ENCODE measurements at regions of chr3 and their contacts with region 1.

Region 1: GRCh38 chr3:150408221-150409102 is at the start of gene TSC22D2:
- DNase-seq: peak; percentile 97
- ATAC-seq: peak; percentile 85 to 91
- total RNA-seq, gene TSC22D2: 24.0 to 34.9 TPM

Region 2: DNA sequence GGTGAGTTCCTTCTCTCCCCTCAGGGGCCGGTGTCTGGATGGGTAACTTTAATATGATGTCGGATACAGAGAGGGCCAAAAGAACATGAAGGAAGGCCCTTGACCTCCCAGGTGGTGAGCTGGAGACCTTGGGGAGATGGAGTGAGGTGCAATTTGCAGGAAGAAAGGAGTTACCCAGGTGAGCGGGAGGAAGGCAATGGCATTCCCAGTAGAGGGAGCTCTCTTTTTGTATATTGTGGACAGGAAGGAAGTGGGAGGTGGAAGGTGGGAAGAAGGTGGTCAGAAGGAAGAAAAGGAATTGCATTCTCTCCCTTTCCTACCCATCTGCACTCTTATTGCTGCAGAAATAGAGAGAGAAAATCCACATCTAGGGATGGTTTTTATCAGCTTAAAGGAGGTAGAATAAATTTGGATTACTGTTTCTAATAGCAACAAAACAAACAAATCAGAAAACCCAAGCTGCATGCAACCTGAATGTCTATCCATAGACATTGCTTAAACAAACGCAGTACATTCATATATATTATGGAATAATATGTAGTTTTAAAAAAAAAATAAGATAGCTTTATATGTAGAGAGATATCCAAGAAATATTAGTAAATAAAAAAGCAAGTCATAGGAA is 169.4 kb before region 1 on chr3:
- intact Hi-C with region 1: loop called in 1 of 2 experiments (anchors 10 kb)
- DNase-seq: no peak
- ATAC-seq: no peak

Region 3: GRCh38 chr3:150286390-150287147 is 121.9 kb before region 1 on chr3:
- intact Hi-C with region 1: loop called in 1 of 2 experiments (anchors 5 kb)
- DNase-seq: no peak
- ATAC-seq: peak in 1 of 2 donors; percentile 77

Region 4: DNA sequence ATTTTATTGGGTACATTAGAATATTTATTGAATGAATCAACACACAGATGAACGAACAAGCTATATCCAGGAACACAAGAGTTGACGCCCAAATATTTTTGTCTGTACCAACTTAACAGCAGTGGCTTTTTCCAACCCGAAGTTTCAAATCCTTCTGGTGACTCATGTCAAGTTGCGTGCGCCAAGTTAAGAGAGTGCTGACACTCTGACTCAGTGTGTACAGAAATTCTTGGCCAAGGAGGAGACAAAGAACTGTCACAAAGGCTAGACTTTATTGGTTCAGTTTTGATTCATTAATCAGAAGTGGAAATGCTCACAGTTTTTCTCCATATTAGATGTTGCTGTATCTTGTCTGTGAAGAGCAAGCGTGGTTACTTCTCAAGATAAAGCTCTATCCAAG is 60.0 kb before region 1 on chr3:
- intact Hi-C with region 1: loop called in 1 of 2 experiments (anchors 2 kb)
- DNase-seq: no peak
- ATAC-seq: peak; percentile 81 to 88

Region 5: DNA sequence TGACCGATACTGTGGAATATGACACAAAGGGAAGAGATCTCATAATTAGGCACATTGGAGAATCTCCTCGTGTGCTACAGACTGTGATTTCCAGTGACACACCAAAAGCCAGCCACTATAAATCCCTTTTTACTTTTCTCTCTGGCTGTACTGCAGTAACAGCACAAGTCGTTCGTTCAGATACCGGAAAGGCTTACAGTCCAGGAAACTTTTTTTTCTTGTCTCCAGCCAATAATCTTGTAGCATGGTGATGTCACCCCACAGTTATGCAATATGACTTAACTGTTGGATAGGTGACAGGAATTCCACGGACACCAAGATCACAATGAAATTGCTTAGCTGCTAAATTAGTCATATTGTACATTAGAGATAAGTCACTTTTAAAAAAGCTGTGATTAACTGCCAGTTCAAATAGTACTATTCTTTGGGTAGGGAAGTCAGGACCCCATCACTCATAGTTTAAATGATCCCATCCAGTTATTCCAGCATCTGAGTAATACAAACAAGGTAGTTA is 36.7 kb before region 1 on chr3:
- intact Hi-C with region 1: loop called in 1 of 2 experiments (anchors 5 kb)
- DNase-seq: peak; percentile 27
- ATAC-seq: peak; percentile 93 to 96

Region 6: DNA sequence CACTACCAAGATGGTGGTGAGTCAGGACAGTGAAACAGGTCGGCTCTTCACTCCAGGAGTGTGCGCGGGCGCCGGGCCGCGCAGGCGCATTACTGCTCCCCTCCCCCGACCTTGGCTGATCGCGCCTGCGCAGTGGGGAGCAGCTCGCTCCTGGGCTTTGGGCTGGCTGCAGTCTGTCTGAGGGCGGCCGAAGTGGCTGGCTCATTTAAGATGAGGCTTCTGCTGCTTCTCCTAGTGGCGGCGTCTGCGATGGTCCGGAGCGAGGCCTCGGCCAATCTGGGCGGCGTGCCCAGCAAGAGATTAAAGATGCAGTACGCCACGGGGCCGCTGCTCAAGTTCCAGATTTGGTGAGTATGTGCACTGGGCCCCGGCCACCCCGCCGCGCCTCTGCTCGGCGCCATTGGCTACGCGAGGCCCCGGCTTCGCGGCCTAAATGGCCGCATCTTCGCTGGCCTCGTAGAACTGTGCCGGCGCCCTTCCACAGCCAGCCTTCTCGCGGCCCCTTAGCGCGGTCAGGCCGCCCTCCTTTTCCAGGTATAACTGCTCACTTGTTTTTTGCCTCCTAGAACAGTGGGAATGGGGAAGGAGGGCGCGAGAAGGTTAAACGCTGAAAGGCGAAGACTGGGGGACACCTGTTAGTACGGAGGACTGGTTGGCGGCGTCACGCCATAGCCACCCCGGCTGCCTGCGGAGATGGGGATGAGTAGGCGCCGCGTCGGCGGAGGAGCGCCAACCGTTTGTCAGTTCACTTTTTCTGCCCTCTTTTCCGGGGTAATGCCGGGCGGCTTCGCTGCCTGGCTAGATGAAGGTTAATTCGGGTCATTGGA is 194.9 kb after region 1 on chr3 and contains the start of gene SELENOT:
- intact Hi-C with region 1: loop called in 1 of 2 experiments (anchors 10 kb)
- DNase-seq: peak; percentile 96
- ATAC-seq: peak; percentile 95 to 96
- total RNA-seq, gene SELENOT: 86.2 to 106 TPM

Region 7: DNA sequence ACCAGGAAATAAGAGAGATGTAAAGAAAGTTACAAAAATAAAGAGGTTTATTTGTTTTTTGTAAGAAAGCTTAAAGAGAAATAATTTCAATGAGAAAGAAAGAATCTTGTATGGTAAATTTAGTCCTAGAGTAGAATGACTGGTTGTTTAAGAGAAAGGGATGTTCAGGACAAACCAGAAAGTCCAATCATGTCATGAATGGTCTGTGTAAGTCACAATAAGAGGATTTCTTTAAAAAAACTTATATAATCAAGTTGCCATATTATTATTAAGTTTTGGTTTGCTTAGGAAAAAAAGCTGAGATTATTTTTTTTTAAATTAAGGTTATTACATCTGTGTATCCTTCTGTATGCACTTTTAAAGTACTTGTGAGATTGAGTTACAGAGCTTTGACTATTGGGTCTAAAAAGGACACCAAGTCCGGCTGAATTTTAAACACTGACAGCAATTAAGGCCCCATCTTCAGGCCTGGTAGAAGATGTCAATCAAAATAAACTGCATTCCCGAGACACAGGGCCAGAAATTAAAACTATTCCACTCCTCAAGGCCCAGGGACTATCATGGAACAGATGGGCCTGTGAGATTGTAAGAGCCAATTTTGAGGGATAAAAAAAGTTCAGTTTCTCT is 283.1 kb after region 1 on chr3:
- intact Hi-C with region 1: no loop called
- DNase-seq: no peak
- ATAC-seq: no peak

Region 8: GRCh38 chr3:150763122-150763841 is 354.8 kb after region 1 on chr3 and contains the start of gene SIAH2:
- intact Hi-C with region 1: loop called in 1 of 2 experiments (anchors 10 kb)
- DNase-seq: peak; percentile 94
- ATAC-seq: peak; percentile 94 to 95
- total RNA-seq, gene SIAH2: 14.7 to 16.4 TPM